ENCODE measurements at regions of chr10 and their contacts with region 1.

Region 1: DNA sequence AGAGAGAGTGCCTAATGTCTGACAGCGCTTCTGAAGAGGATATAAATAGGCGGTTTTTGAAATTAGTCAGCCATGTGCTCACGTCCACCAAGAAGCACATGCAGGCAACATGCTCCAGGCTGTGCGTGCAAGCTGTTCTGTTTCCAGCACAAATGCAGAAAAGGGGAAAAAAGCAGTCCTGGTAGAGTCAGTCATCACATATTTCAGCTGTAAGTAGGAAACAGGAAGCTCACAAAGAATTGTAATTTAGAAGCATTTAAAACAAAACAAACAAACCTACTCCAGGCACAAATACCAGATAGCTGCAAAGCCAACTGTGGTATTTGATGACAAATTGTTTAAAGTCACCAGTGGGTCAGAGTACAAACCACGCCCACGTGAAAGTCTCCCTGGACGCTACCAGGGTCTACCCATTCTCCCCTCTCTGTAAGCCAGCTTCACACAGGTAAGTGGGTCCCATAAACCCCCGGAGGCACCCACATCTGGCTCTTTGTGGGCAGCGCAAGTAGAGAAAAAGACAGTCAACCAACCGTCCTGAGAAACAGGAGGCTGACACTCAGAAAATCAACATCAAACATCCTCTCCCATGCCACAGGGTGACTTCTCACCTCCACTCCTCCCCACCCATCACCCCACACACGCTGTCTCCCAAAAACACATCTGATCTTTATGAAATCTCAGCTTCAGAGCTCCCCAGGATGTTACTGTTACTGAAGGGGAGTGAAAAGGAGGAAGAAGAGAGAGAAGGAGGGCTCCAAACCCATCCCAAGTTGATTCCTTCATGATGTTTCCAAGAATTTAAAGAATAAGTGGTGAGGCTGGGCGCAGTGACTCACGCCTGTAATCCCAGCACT is 186.4 kb downstream of the FAM107B start:
- DNase-seq: peak; percentile 52
- H3K4me3 Mint-ChIP-seq: peak overlapping the region; percentile 74
- H3K27ac Mint-ChIP-seq: peak overlapping the region; percentile 97
- H3K4me1 Mint-ChIP-seq: peaks cover 94% of the 10 kb centered on the region
- H3K27me3 Mint-ChIP-seq: no peaks in the 10 kb centered on the region

Region 2: DNA sequence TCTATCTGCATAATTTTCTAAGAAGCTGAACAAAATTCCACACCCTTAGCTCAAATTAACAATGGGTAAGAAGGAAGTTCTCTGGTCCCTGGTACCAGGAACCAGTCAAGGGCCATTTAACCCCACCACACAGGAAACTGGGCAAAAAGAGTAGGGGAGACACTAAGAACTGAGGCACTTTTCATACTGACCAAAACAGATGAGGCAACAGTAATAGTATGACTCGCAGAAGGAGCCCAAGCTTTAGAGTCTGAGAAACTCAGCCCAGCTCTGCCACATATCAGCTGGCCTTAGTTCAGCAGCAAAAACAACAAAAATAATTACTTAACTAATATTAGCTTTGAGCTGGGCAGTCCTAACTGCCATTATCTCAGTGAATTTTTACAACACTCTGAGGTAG is 34.9 kb before region 1 on chr10:
- intact Hi-C with region 1: loop called (anchors 5 kb)
- DNase-seq: no peak
- H3K4me3 Mint-ChIP-seq: peak overlapping the region; percentile 11
- H3K27ac Mint-ChIP-seq: peak overlapping the region; percentile 78
- H3K4me1 Mint-ChIP-seq: peaks cover 84% of the 10 kb centered on the region
- H3K27me3 Mint-ChIP-seq: peaks cover 1% of the 10 kb centered on the region

Region 3: GRCh38 chr10:14560274-14560673 is 28.0 kb before region 1 on chr10:
- intact Hi-C with region 1: loop called (anchors 1 kb)
- DNase-seq: peak; percentile 59
- H3K4me3 Mint-ChIP-seq: peak overlapping the region; percentile 41
- H3K27ac Mint-ChIP-seq: peak overlapping the region; percentile 95
- H3K4me1 Mint-ChIP-seq: peaks cover 97% of the 10 kb centered on the region
- H3K27me3 Mint-ChIP-seq: no peaks in the 10 kb centered on the region

Region 4: DNA sequence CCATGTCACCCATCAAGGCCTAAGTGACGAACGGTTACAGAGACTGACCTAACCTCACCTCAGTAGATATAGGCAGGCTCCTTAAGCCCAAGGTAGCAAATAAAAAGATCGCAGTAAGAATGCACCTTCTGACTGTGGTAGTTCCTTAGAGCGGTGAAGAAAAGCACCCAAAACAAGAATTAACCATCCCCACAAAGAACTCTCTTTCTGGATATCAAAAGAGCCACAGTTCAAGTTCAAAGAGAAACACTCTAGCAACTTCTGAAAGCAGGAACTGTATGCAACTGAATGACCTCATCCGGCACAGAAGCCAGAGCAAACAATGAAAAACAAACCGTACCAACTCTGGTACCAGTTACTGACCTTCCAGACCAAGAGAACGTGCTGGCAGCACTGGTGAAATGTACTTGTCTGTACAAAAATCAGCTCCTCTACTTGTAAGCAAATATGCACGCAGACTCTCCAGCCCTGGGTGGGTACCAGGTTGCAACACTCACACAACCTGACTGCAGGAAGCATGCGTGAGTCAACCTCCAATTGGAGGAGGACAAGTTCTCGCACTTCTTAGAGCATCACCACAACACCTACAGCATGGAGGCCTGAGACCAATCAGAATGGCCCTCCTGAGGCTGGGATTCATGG is 16.3 kb before region 1 on chr10:
- intact Hi-C with region 1: loop called (anchors 1 kb)
- DNase-seq: peak; percentile 55
- H3K4me3 Mint-ChIP-seq: peak overlapping the region; percentile 82
- H3K27ac Mint-ChIP-seq: peak overlapping the region; percentile 97
- H3K4me1 Mint-ChIP-seq: peaks cover 86% of the 10 kb centered on the region
- H3K27me3 Mint-ChIP-seq: no peaks in the 10 kb centered on the region

Region 5: GRCh38 chr10:14617852-14618251 is 29.5 kb after region 1 on chr10:
- intact Hi-C with region 1: no loop called
- DNase-seq: no peak
- H3K4me3 Mint-ChIP-seq: no peak overlapping the region
- H3K27ac Mint-ChIP-seq: no peak overlapping the region
- H3K4me1 Mint-ChIP-seq: peaks cover 28% of the 10 kb centered on the region
- H3K27me3 Mint-ChIP-seq: no peaks in the 10 kb centered on the region

Region 6: DNA sequence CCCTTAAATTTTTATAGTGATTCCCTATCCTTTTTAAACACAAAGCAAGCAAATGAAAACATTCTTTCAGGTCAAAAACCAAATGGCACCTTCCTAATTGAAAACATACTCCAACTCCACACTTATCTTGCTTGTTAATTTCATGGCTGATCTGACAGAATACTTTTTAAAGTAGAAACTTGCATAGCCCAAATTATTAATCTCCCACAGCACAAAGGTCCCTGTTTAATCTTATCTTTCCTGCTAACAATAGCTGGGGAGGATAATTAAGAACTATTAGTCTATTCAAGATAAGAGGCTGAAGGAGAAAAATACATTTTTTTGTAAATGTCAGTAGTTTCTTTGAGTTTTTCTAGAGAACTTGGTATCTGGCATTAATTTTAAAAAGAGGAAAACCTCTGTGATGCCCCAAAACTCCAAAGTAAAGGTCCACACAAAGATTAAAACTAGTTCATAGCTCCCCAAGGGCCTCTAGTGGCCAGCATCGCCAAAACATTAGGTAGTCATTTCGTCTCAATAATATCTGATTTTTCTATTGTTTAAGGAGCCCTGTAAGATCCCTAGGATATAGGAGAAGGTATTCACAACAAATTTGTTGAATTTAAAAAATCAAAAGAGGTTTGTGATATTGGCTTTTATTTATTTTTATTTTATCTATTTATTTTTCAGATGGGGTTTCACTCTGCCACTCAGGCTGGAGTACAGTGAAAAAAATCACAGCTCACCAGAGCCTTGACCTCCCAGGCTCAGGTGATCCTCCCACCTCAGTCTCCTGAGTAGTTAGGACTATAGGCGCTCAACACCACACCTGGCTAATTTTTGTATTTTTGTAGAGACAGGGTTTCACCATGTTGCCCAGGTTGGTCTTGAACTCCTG is 234.8 kb after region 1 on chr10:
- intact Hi-C with region 1: loop called (anchors 1 kb)
- DNase-seq: no peak
- H3K4me3 Mint-ChIP-seq: no peak overlapping the region
- H3K27ac Mint-ChIP-seq: no peak overlapping the region
- H3K4me1 Mint-ChIP-seq: peaks cover 22% of the 10 kb centered on the region
- H3K27me3 Mint-ChIP-seq: peaks cover 9% of the 10 kb centered on the region

Region 7: GRCh38 chr10:14959276-14960057 is 371.2 kb after region 1 on chr10 and contains the start of gene MEIG1:
- intact Hi-C with region 1: loop called (anchors 5 kb)
- DNase-seq: peak; percentile 91
- H3K4me3 Mint-ChIP-seq: peak within 1 kb of the TSS; percentile 97
- H3K27ac Mint-ChIP-seq: peak within 1 kb of the TSS; percentile 95
- H3K4me1 Mint-ChIP-seq: peaks cover 22% of the 10 kb centered on the region
- H3K27me3 Mint-ChIP-seq: no peaks in the 10 kb centered on the region
- total RNA-seq, gene MEIG1: 0.44 TPM in 1 of 2 replicates, not detected in the other

Region 8: DNA sequence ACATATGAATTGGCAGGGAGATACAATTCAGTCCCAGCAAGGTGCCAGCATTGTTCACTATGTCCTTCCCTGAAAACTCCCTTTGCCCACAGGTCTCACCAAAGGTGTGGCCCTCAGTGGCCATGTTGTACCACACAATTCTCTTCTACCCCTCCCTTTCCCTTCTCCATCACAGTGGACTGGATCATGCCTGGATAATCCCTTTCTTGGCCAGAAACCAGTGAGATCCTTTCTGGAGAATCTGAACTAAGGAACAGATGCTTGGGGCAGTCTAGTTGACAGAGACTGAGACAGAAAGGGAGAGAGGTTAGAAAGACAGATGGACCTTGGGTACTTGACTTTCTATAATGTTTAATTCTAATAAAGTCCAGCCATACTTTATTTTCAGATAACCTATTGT is 570.7 kb after region 1 on chr10:
- intact Hi-C with region 1: no loop called
- DNase-seq: no peak
- H3K4me3 Mint-ChIP-seq: no peak overlapping the region
- H3K27ac Mint-ChIP-seq: no peak overlapping the region
- H3K4me1 Mint-ChIP-seq: peaks cover 6% of the 10 kb centered on the region
- H3K27me3 Mint-ChIP-seq: no peaks in the 10 kb centered on the region